Posterior vena cava (tissue), 2 donors: ENCODE measurements at regions of chr12 and their contacts with region 1.

Region 1: DNA sequence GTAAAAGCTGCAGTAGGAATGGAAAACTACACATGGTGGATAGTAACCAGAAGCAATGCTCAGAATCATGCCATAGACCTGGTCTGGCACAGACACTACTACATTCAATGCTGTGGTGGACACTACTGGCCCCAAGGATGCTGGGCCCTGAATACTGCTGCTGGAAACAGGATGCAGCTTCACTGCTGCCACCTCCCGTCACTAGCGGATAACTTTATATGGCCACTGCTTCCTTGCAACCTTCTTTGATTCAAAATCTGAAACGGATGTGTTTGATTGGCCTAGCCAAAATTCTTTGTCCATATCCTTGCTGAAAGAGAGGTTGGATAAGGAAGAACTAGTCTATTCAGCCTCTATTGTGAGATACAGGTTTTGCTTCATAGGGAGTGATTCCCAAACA is 30.7 kb downstream of the ADCY6 start:
- DNase-seq: no peak

Region 2: DNA sequence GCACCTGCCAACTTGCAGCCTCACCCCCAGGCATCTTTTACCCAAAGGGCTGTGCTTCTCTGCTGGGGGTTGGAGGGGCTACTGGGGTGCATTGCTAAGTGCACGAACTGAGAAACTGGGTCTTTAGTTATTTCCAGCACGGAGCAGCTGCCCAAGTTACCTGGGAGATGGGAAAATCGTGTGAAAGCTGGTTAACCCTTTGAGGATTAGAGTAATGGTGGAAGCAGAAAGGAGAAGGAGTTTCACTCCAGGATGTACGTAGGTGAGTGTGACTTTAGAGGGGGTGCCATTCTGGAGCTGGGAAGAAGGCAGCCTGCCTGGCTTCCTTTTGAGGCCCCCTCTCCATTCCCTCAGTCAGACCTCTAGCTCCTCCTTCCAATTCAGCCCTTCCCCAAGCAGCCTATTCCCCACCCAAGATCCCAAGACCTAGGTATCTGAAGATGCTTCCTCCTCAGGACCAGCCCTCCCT is 31.7 kb after region 1 on chr12:
- intact Hi-C with region 1: loop called in 1 of 2 experiments (anchors 2 kb)
- DNase-seq: no peak

Region 3: DNA sequence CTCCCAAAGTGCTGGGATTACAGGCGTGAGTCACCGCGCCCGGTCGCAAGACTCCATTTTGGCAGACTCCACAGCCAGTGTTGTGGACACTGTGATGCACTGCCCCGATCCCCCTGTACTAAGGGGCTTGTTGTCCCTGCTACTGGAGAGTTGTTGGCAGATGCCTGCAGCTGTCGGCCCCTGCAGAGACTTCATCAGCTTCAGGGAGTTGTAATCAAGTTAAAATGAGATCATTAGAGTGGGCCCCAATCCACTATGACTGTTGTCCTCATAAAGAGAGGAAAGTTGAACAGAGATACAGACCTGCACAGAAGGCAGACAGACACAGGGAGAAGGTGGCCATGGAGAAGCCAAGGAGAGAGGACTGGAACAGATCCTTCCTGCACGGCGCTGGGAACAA is 454.4 kb after region 1 on chr12:
- intact Hi-C with region 1: no loop called
- DNase-seq: no peak